ENCODE measurements at regions of chr1 and their contacts with region 1.

Region 1: GRCh38 chr1:220776720-220777326 is 9.9 kb upstream of the MTARC1 start:
- DNase-seq: peak; percentile 49
- ATAC-seq: peak; percentile 100
- H3K4me3 ChIP-seq: no peak overlapping the region
- H3K27ac ChIP-seq: no peak overlapping the region
- H3K4me1 ChIP-seq: no peaks in the 10 kb centered on the region
- H3K27me3 ChIP-seq: no peaks in the 10 kb centered on the region
- CTCF ChIP-seq: peak; percentile 98
- EP300 ChIP-seq: no peak
- POLR2A ChIP-seq: no peak
- RAD21 ChIP-seq: peak; percentile 96

Region 2: GRCh38 chr1:220281159-220281574 is 495.7 kb before region 1 on chr1:
- CTCF ChIA-PET with region 1: no interaction called
- POLR2A ChIA-PET with region 1: no interaction called
- in situ Hi-C with region 1: loop called (anchors 10 kb)
- intact Hi-C with region 1: loop called (anchors 1 kb)
- DNase-seq: no peak
- ATAC-seq: peak; percentile 49
- H3K4me3 ChIP-seq: no peak overlapping the region
- H3K27ac ChIP-seq: no peak overlapping the region
- H3K4me1 ChIP-seq: no peaks in the 10 kb centered on the region
- H3K27me3 ChIP-seq: peaks cover 0 to 25% of the 10 kb centered on the region in 2 experiments; a peak in 1 of 5 replicates
- CTCF ChIP-seq: peak; percentile 42; the same call in 1 of the 2 replicates
- EP300 ChIP-seq: no peak
- POLR2A ChIP-seq: no peak
- RAD21 ChIP-seq: no peak

Region 3: DNA sequence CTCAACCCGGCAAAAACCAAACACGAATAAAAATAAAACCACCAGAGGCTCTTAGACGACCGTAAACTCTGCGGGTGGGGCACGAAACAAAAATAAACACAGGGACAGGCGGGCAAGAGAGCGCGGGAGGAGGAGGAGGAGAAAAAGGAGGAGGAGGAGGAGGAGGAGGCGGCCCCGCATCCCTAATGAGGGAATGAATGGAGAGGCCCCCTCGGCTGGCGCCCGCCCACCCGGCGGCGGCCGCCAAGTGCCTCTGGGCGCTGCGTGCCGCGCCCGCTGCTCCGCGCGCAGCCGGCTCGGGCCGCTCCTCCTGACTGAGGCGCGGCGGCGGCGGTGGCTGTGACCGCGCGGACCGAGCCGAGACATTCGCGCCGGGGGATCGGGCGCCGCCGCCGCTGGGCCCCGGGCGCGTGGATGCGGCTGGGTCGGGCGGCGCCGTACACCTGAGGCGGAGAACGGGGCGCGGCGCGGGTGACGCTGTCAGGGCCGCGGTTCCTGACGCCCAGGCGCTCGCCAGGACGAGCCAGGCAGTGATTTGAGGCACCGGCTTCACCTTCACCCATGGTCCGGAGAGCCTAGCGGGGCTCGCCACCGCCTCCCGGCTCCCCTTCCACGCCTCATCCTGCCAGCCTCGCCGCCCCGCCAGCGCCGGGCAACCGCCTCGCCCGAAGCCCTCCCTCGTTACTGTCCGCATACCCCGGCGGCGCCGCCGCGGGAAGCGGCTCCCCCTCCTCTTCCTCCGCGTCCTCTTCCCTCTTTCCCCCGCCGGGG is 248.7 kb before region 1 on chr1 and contains the start of gene MARK1:
- CTCF ChIA-PET with region 1: no interaction called
- POLR2A ChIA-PET with region 1: no interaction called
- in situ Hi-C with region 1: loop called (anchors 25 kb)
- intact Hi-C with region 1: no loop called
- DNase-seq: no peak
- ATAC-seq: peak; percentile 87
- H3K4me3 ChIP-seq: peak within 1 kb of the TSS; percentile 52 to 69 (median 54)
- H3K27ac ChIP-seq: no peak within 1 kb of the TSS
- H3K4me1 ChIP-seq: peaks cover 7% of the 10 kb centered on the region
- H3K27me3 ChIP-seq: peaks cover 5 to 39% of the 10 kb centered on the region in 2 experiments; a peak in 4 of 5 replicates
- CTCF ChIP-seq: no peak
- EP300 ChIP-seq: no peak
- POLR2A ChIP-seq: no peak
- RAD21 ChIP-seq: no peak
- total RNA-seq, gene MARK1: not detected in 2 replicates

Region 4: GRCh38 chr1:220680085-220680687 is 96.6 kb before region 1 on chr1:
- CTCF ChIA-PET with region 1: interaction called, 58 read pairs
- POLR2A ChIA-PET with region 1: no interaction called
- in situ Hi-C with region 1: no loop called
- intact Hi-C with region 1: loop called (anchors 1 kb)
- DNase-seq: peak; percentile 42
- ATAC-seq: peak; percentile 93
- H3K4me3 ChIP-seq: no peak overlapping the region
- H3K27ac ChIP-seq: no peak overlapping the region
- H3K4me1 ChIP-seq: peaks cover 12% of the 10 kb centered on the region
- H3K27me3 ChIP-seq: no peaks in the 10 kb centered on the region
- CTCF ChIP-seq: peak; percentile 79
- EP300 ChIP-seq: no peak
- POLR2A ChIP-seq: no peak
- RAD21 ChIP-seq: peak; percentile 68

Region 5: GRCh38 chr1:220733090-220733601 is 43.7 kb before region 1 on chr1:
- CTCF ChIA-PET with region 1: interaction called, 7 read pairs
- POLR2A ChIA-PET with region 1: interaction called, 5 read pairs
- in situ Hi-C with region 1: no loop called
- intact Hi-C with region 1: loop called (anchors 1 kb)
- DNase-seq: peak; percentile 77
- ATAC-seq: peak; percentile 79
- H3K4me3 ChIP-seq: peak overlapping the region in 2 of 3 experiments; percentile 43 to 52; a peak in 3 of 6 replicates
- H3K27ac ChIP-seq: no peak overlapping the region
- H3K4me1 ChIP-seq: peaks cover 31% of the 10 kb centered on the region
- H3K27me3 ChIP-seq: no peaks in the 10 kb centered on the region
- CTCF ChIP-seq: peak; percentile 91
- EP300 ChIP-seq: 0 out of 4 replicates have a peak, but pooled peaks of 1 of the 2 experiments have one; percentile 9
- POLR2A ChIP-seq: no peak
- RAD21 ChIP-seq: peak; percentile 83